CD14-positive monocyte (primary cell): ENCODE measurements at regions of chr4 and their contacts with region 1.

Region 1: GRCh38 chr4:15457406-15458201 is 12.1 kb upstream of the CC2D2A start:
- DNase-seq: peak; percentile 31 to 63 (median 57)
- H3K4me3 ChIP-seq: peak overlapping the region in 1 of 3 experiments; percentile 50
- H3K4me3 Mint-ChIP-seq: peak overlapping the region in 1 of 2 donors; percentile 59
- H3K27ac ChIP-seq: peak overlapping the region in 1 of 2 donors; percentile 56
- H3K27ac Mint-ChIP-seq: peak overlapping the region in 5 of 7 donors; percentile 12 to 71 (median 56)
- H3K4me1 ChIP-seq: peaks cover 36% of the 10 kb centered on the region in 2 donors
- H3K4me1 Mint-ChIP-seq: peaks cover 39% of the 10 kb centered on the region
- H3K27me3 ChIP-seq: no peaks in the 10 kb centered on the region
- H3K27me3 Mint-ChIP-seq: no peaks in the 10 kb centered on the region
- CTCF ChIP-seq: peak; percentile 84

Region 2: DNA sequence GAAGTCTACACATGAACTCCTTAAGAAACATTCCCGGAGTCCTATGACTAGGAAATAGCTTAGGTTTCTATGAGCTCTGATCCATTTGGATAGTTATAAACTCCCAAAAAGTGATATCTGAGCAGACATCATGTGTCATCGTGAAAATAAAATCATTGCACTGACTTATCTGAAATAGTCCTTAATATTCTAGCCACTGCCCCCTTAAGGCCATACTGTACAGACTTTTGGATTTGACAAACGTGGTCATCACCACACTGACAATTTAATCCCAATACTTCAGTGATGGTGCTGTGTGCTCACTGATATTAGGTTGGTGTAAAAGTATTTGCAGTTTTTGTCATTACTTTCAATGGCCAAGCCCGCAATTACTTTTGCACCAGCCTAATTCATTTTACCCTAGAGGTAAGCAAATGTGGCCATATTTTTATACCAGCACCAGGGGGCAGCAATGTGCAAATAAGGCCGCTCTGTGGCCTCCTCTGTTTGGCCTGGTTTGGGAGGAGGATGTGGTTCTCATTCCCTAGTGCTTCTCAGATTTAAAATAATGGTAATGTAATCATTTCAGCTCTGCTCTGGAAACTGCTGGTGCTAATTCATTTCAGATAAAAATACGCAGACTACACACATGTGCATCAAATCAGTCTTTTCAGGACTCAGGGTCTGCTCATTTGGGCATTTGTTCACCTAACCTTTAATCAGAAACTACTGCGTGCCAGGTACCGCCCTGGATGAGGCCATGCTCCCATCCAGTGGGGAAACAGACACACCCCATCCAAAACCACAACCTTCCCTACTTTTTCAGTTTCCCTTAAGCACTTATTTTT is 226.1 kb before region 1 on chr4:
- intact Hi-C with region 1: loop called in 1 of 2 experiments (anchors 5 kb)
- DNase-seq: peak; percentile 57 to 79 (median 73)
- H3K4me3 ChIP-seq: no peak overlapping the region
- H3K4me3 Mint-ChIP-seq: no peak overlapping the region
- H3K27ac ChIP-seq: no peak overlapping the region
- H3K27ac Mint-ChIP-seq: no peak overlapping the region
- H3K4me1 ChIP-seq: peaks cover 22 to 24% of the 10 kb centered on the region in 2 donors
- H3K4me1 Mint-ChIP-seq: peaks cover 29% of the 10 kb centered on the region
- H3K27me3 ChIP-seq: no peaks in the 10 kb centered on the region
- H3K27me3 Mint-ChIP-seq: no peaks in the 10 kb centered on the region
- CTCF ChIP-seq: peak; percentile 76

Region 3: DNA sequence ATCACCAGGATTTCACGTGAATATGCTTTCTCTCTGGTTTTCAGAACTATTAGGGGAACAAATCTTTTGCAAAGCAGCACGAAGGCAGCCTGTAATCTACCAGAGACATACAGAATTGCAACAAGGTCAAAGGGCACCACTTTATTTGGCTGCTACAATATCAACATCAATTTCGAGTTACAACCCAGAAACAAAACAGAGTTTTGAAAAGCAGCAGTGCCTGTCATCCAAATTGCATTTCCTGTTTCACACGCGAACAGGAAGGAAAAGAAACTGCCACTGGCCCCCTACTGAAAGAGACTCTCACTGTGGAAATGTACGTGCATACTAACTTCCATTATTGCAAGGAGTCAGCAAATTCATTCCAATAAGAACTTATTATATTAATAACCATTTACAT is 46.9 kb before region 1 on chr4:
- intact Hi-C with region 1: no loop called
- DNase-seq: peak; percentile 54 to 74 (median 69)
- H3K4me3 ChIP-seq: peak overlapping the region in 2 of 3 experiments; percentile 36 to 60
- H3K4me3 Mint-ChIP-seq: peak overlapping the region in 1 of 2 donors; percentile 67
- H3K27ac ChIP-seq: peak overlapping the region; percentile 14 to 80
- H3K27ac Mint-ChIP-seq: peak overlapping the region; percentile 72 to 86 (median 79)
- H3K4me1 ChIP-seq: peaks cover 69 to 83% of the 10 kb centered on the region in 2 donors
- H3K4me1 Mint-ChIP-seq: peaks cover 73% of the 10 kb centered on the region
- H3K27me3 ChIP-seq: no peaks in the 10 kb centered on the region
- H3K27me3 Mint-ChIP-seq: peaks cover 0 to 2% (median 0%) of the 10 kb centered on the region in 3 donors
- CTCF ChIP-seq: no peak

Region 4: GRCh38 chr4:15636835-15637234 is 179.2 kb after region 1 on chr4:
- intact Hi-C with region 1: no loop called
- DNase-seq: no peak
- H3K4me3 ChIP-seq: no peak overlapping the region
- H3K4me3 Mint-ChIP-seq: no peak overlapping the region
- H3K27ac ChIP-seq: peak overlapping the region in 1 of 2 donors; percentile 46
- H3K27ac Mint-ChIP-seq: peak overlapping the region in 3 of 7 donors; percentile 14 to 49 (median 22)
- H3K4me1 ChIP-seq: no peaks in the 10 kb centered on the region
- H3K4me1 Mint-ChIP-seq: peaks cover 3% of the 10 kb centered on the region
- H3K27me3 ChIP-seq: no peaks in the 10 kb centered on the region
- H3K27me3 Mint-ChIP-seq: no peaks in the 10 kb centered on the region
- CTCF ChIP-seq: no peak